Activated CD4-positive, alpha-beta memory T cell treated with anti-CD3 and anti-CD28 coated beads, Interleukin-2, amount 10 ng/mL, durations not matched to agents 7 days and 5 days (primary cell): ENCODE measurements at regions of chr2 and their contacts with region 1.

Region 1: DNA sequence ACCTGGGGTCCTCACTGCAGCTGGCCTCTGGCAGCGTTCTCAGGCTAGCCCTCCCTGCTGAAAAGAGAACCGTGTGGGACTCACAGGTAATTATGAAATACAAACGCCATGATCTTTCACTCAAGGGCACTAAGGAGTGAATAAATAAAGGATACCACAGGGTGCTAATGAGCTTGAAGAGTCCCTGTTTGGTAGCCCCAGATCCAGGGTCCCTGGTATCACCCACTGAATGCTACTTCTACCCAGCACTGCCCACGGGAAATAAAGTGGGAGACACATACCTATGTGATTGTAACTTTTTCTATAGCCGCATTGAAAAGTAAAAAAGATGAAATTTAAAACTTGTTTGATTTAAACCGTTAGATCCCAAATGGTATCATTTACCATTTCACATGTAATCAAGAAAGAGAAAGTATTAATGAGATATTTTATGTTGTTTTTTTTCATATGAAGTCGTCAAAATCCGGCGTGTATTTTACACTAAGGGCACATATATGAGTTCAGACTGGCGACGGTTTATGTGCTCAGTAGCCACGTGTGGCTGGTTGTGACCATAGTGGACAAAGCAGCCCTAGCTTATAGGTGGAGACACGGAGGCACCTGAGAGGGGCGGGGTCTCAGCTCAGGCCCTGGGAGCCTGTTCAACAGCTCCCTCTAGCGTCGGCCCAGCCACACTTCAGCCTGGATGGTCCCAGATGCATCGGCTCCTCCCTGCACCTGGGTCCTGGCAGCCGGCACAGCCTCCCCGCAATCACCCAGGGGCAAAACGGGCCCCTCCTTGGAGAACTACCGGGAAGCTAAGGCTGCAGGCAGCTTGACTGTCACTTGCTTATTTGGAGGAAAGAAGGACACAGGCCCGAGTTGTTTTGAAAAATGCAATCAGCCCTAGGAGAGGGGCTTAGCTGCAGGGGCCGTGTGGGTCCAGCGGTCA is 39.2 kb downstream of the ODC1 start:
- DNase-seq: peak; percentile 85
- H3K4me3 Mint-ChIP-seq: peak overlapping the region; percentile 74
- H3K27ac Mint-ChIP-seq: peak overlapping the region; percentile 93
- H3K4me1 Mint-ChIP-seq: peaks cover 36% of the 10 kb centered on the region
- H3K27me3 Mint-ChIP-seq: no peaks in the 10 kb centered on the region

Region 2: DNA sequence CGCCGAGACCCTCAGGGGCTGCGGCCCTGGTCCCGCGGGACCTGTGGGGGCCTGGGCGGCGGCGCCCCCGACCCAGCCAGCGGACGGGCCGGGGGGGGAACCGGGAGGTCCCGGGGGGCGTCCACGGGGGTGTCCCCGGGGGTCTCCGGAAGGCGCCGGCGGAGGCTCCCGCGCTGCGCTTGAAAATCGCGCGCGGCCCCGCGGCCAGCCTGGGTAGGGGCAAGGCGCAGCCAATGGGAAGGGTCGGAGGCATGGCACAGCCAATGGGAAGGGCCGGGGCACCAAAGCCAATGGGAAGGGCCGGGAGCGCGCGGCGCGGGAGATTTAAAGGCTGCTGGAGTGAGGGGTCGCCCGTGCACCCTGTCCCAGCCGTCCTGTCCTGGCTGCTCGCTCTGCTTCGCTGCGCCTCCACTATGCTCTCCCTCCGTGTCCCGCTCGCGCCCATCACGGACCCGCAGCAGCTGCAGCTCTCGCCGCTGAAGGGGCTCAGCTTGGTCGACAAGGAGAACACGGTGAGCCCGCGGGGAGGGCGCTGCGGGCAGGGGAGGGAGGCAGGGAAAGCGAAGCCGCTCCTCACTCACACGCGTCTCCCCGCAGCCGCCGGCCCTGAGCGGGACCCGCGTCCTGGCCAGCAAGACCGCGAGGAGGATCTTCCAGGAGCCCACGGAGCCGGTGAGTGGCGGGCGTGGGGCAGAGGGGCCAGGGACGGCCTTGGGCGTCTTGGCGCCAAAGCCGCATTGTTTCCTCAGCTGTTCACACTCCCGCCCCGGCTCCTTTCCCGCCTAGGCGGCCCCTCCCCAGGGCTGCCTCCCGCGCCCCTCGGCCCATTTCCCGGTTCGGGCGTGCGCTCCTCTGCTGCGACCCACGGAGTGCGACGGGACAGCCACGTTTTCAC is 286.3 kb before region 1 on chr2 and contains the start of gene RRM2:
- CTCF ChIA-PET with region 1: interaction called, 127 read pairs
- POLR2A ChIA-PET with region 1: interaction called, 62 read pairs
- DNase-seq: peak; percentile 96
- H3K4me3 Mint-ChIP-seq: peak within 1 kb of the TSS; percentile 97
- H3K27ac Mint-ChIP-seq: peak within 1 kb of the TSS; percentile 98
- H3K4me1 Mint-ChIP-seq: peaks cover 67% of the 10 kb centered on the region
- H3K27me3 Mint-ChIP-seq: no peaks in the 10 kb centered on the region
- total RNA-seq, gene RRM2: 546 to 570 TPM

Region 3: GRCh38 chr2:10157293-10157692 is 251.6 kb before region 1 on chr2:
- CTCF ChIA-PET with region 1: interaction called, 18 read pairs
- POLR2A ChIA-PET with region 1: interaction called, 4 read pairs
- DNase-seq: no peak
- H3K4me3 Mint-ChIP-seq: no peak overlapping the region
- H3K27ac Mint-ChIP-seq: no peak overlapping the region
- H3K4me1 Mint-ChIP-seq: peaks cover 25% of the 10 kb centered on the region
- H3K27me3 Mint-ChIP-seq: no peaks in the 10 kb centered on the region

Region 4: DNA sequence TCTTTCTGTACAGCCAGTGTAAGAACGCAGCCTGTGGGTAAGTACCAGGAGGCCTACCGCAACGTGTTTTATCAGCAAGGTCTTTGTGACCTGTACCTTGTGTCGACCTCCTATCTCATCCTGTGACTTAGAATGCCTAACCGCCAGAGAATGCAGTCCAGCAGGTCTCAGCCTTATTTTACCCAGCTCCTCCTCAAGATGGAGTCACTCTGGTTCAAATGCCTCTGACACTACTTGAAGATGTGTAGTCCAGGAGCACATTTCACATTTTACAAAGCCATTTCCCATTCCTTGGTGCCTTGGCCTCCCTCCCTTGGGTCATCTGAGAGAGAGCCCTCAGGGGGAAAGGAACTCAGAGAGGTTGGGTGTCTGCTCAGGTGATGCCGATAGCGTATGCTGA is 112.8 kb before region 1 on chr2:
- CTCF ChIA-PET with region 1: interaction called, 138 read pairs
- POLR2A ChIA-PET with region 1: interaction called, 62 read pairs
- DNase-seq: no peak
- H3K4me3 Mint-ChIP-seq: no peak overlapping the region
- H3K27ac Mint-ChIP-seq: no peak overlapping the region
- H3K4me1 Mint-ChIP-seq: peaks cover 38% of the 10 kb centered on the region
- H3K27me3 Mint-ChIP-seq: no peaks in the 10 kb centered on the region

Region 5: GRCh38 chr2:10382354-10383061 is 26.4 kb before region 1 on chr2:
- CTCF ChIA-PET with region 1: interaction called, 25 read pairs
- POLR2A ChIA-PET with region 1: interaction called, 23 read pairs
- DNase-seq: peak; percentile 54
- H3K4me3 Mint-ChIP-seq: peak overlapping the region; percentile 47
- H3K27ac Mint-ChIP-seq: peak overlapping the region; percentile 40
- H3K4me1 Mint-ChIP-seq: peaks cover 74% of the 10 kb centered on the region
- H3K27me3 Mint-ChIP-seq: no peaks in the 10 kb centered on the region